Heart right ventricle (tissue), 16 donors: ENCODE measurements at regions of chr9 and their contacts with region 1.

Region 1: DNA sequence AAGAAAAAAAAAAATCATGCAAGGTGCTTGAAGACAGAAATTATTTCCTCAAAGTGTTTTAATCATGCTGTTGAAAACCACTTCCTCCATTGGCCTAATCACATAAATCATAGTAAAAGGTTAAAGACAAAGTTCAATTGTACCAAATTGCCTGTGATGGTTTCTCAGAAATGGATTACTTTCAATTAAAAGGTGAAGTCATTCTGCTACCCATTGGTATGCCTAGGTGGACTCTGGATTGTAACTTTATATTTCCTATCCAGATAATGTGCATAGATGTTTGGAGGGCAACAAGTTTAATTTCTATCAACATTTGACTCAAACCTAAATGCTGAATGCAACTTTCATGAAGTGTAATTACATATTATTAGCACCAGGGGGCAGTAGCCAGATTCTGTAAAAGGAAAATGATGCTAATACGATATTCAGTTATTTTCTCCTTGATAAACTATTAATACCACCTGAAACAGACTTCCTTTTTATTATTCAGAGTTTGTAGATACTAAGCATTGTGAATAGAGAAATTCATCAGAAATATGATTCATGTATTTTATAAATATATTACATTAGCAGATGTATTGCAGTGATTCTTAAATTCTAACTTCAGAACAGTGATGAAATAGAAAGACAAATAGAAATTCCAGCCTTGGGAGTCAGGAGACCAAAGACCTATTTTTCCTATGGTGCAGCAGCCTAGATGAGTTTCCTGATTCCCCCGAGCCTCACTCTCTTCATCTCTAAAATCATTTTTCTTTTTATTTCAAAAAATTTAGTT is 148.2 kb downstream of the CAAP1 start:
- DNase-seq: no peak
- ATAC-seq: no peak
- H3K4me3 ChIP-seq: no peak overlapping the region
- H3K27ac ChIP-seq: no peak overlapping the region
- H3K4me1 ChIP-seq: no peaks in the 10 kb centered on the region
- H3K27me3 ChIP-seq: no peaks in the 10 kb centered on the region
- CTCF ChIP-seq: peak; percentile 62 to 86 (median 80)

Region 2: GRCh38 chr9:26439061-26439624 is 305.2 kb before region 1 on chr9:
- intact Hi-C with region 1: no loop called
- DNase-seq: no peak
- ATAC-seq: no peak
- H3K4me3 ChIP-seq: no peak overlapping the region
- H3K27ac ChIP-seq: no peak overlapping the region
- H3K4me1 ChIP-seq: no peaks in the 10 kb centered on the region
- H3K27me3 ChIP-seq: no peaks in the 10 kb centered on the region
- CTCF ChIP-seq: no peak

Region 3: DNA sequence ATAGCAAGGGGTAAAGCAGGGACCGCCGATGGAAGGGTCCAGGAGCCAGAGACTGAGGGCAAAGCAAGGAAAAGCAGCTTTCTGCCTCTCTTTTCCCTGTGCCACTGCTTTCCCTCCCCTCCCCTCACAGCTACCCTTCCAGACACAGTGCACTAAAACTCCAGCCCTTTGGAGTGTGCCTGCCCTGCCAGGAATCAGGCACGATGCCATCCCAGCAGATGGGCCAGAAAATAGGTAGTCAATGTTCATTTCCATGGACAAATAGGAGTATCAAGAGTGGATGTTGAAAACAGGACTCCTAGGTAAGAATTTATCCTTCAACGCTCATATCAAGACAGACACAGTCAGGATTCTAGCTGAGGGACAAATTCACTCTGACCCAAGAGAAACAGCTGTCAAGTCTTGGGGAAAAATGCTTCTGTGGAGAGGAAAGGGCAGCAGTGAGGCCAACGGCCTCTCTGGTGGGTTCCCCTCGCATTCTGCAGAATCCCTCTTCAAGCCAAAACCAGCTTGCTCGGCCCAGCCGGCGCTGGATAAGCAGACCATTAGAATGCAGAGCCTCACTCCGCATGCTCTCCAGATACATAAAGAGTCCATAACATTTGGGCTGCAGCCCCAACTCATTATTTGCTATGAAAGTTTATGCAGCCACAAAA is 10.3 kb after region 1 on chr9:
- intact Hi-C with region 1: loop called in 2 of 10 experiments (anchors 1 to 2 kb)
- DNase-seq: no peak
- ATAC-seq: no peak
- H3K4me3 ChIP-seq: no peak overlapping the region
- H3K27ac ChIP-seq: no peak overlapping the region
- H3K4me1 ChIP-seq: no peaks in the 10 kb centered on the region
- H3K27me3 ChIP-seq: no peaks in the 10 kb centered on the region
- CTCF ChIP-seq: no peak

Region 4: GRCh38 chr9:26863074-26863473 is 118.7 kb after region 1 on chr9:
- intact Hi-C with region 1: loop called in 3 of 10 experiments (anchors 10 kb)
- DNase-seq: no peak
- ATAC-seq: no peak
- H3K4me3 ChIP-seq: no peak overlapping the region
- H3K27ac ChIP-seq: no peak overlapping the region
- H3K4me1 ChIP-seq: peaks cover 0 to 4% (median 0%) of the 10 kb centered on the region in 9 donors
- H3K27me3 ChIP-seq: no peaks in the 10 kb centered on the region
- CTCF ChIP-seq: peak in 6 of 9 donors; percentile 16 to 38 (median 25)

Region 5: GRCh38 chr9:26975693-26976059 is 231.3 kb after region 1 on chr9:
- intact Hi-C with region 1: loop called (anchors 1 to 10 kb)
- DNase-seq: peak in 1 of 2 donors; percentile 31
- ATAC-seq: peak in 7 of 8 donors; percentile 38 to 75 (median 49)
- H3K4me3 ChIP-seq: no peak overlapping the region
- H3K27ac ChIP-seq: no peak overlapping the region
- H3K4me1 ChIP-seq: peaks cover 0 to 9% (median 0%) of the 10 kb centered on the region in 9 donors
- H3K27me3 ChIP-seq: no peaks in the 10 kb centered on the region
- CTCF ChIP-seq: peak; percentile 31 to 79 (median 66)

Region 6: GRCh38 chr9:27212191-27212590 is 467.8 kb after region 1 on chr9:
- intact Hi-C with region 1: no loop called
- DNase-seq: no peak
- ATAC-seq: no peak
- H3K4me3 ChIP-seq: no peak overlapping the region
- H3K27ac ChIP-seq: no peak overlapping the region
- H3K4me1 ChIP-seq: no peaks in the 10 kb centered on the region
- H3K27me3 ChIP-seq: no peaks in the 10 kb centered on the region
- CTCF ChIP-seq: no peak

Region 7: GRCh38 chr9:27276193-27277030 is 532.0 kb after region 1 on chr9:
- intact Hi-C with region 1: loop called in 2 of 10 experiments (anchors 5 kb)
- DNase-seq: peak in 1 of 2 donors; percentile 16
- ATAC-seq: peak in 5 of 8 donors; percentile 44 to 61 (median 51)
- H3K4me3 ChIP-seq: peak overlapping the region in 6 of 10 donors; percentile 16 to 29 (median 22)
- H3K27ac ChIP-seq: no peak overlapping the region
- H3K4me1 ChIP-seq: peaks cover 0 to 16% (median 4%) of the 10 kb centered on the region in 9 donors
- H3K27me3 ChIP-seq: no peaks in the 10 kb centered on the region
- CTCF ChIP-seq: peak; percentile 67 to 90 (median 81)